Adrenal gland (tissue), 19 donors: ENCODE measurements at regions of chr2 and their contacts with region 1.

Region 1: GRCh38 chr2:238784671-238785527 is 63.0 kb upstream of the TWIST2 start:
- DNase-seq: peak; percentile 44 to 86 (median 69)
- H3K4me3 ChIP-seq: no peak overlapping the region
- H3K27ac ChIP-seq: no peak overlapping the region
- H3K4me1 ChIP-seq: no peaks in the 10 kb centered on the region
- H3K27me3 ChIP-seq: no peaks in the 10 kb centered on the region
- CTCF ChIP-seq: peak; percentile 74 to 92 (median 88)
- POLR2A ChIP-seq: no peak

Region 2: DNA sequence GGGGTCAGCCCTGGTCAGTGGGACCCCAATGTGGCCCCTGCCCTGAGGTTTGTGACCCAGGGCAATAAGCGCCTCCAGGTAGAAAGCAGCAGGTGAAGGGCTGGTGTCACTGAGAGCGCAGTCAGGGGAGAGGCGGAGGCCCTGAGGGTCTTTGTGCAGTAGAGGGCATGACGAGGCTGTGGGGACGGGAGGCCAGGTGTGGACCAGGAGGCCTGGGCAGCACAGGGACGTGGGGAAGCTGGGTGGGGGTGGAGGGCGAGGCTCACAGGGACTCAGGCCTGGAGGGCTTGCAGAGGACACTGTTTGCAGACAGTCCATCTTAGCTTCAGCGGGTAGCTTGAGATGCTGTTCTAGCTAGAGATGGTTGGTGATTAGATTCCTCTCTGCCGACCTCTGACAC is 432.5 kb before region 1 on chr2:
- intact Hi-C with region 1: loop called in 1 of 2 experiments (anchors 10 kb)
- DNase-seq: no peak
- H3K4me3 ChIP-seq: no peak overlapping the region
- H3K27ac ChIP-seq: no peak overlapping the region
- H3K4me1 ChIP-seq: no peaks in the 10 kb centered on the region
- H3K27me3 ChIP-seq: no peaks in the 10 kb centered on the region
- CTCF ChIP-seq: no peak
- POLR2A ChIP-seq: no peak

Region 3: GRCh38 chr2:238513346-238513745 is 271.6 kb before region 1 on chr2:
- intact Hi-C with region 1: loop called in 1 of 2 experiments (anchors 5 kb)
- DNase-seq: peak in 6 of 7 donors; percentile 27 to 70 (median 54)
- H3K4me3 ChIP-seq: no peak overlapping the region
- H3K27ac ChIP-seq: no peak overlapping the region
- H3K4me1 ChIP-seq: no peaks in the 10 kb centered on the region
- H3K27me3 ChIP-seq: no peaks in the 10 kb centered on the region
- CTCF ChIP-seq: peak; percentile 13 to 54 (median 40)
- POLR2A ChIP-seq: no peak

Region 4: GRCh38 chr2:238523158-238524110 is 261.5 kb before region 1 on chr2:
- intact Hi-C with region 1: loop called in 1 of 2 experiments (anchors 5 kb)
- DNase-seq: peak in 6 of 7 donors; percentile 13 to 58 (median 50)
- H3K4me3 ChIP-seq: no peak overlapping the region
- H3K27ac ChIP-seq: no peak overlapping the region
- H3K4me1 ChIP-seq: no peaks in the 10 kb centered on the region
- H3K27me3 ChIP-seq: peaks cover 11% of the 10 kb centered on the region
- CTCF ChIP-seq: peak in 3 of 6 experiments; percentile 29 to 32 (median 29)
- POLR2A ChIP-seq: no peak

Region 5: DNA sequence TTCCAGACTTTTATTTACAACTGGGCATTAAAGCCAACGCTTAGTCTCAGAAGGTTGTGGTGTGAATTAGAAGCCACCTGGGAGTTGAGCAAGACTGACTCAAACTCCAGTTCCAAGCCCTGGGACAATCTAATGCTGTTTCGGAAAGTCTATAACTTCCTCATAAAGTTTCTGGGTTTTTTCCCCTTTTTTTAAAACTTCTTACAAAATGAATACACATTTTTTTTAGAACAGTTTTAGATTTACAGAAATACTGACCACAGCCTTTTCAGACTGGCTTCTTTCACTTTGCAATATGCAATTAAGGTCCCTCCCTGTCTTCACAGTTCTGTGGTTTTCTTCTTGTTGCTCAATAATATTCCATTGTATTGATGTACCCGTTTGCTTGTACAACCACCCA is 52.9 kb before region 1 on chr2:
- intact Hi-C with region 1: no loop called
- DNase-seq: peak in 1 of 7 donors; percentile 2
- H3K4me3 ChIP-seq: no peak overlapping the region
- H3K27ac ChIP-seq: no peak overlapping the region
- H3K4me1 ChIP-seq: peaks cover 0 to 12% of the 10 kb centered on the region in 2 donors
- H3K27me3 ChIP-seq: no peaks in the 10 kb centered on the region
- CTCF ChIP-seq: no peak
- POLR2A ChIP-seq: no peak